GM12878 (cell line): ENCODE measurements at regions of chr6 and their contacts with region 1.

Region 1: DNA sequence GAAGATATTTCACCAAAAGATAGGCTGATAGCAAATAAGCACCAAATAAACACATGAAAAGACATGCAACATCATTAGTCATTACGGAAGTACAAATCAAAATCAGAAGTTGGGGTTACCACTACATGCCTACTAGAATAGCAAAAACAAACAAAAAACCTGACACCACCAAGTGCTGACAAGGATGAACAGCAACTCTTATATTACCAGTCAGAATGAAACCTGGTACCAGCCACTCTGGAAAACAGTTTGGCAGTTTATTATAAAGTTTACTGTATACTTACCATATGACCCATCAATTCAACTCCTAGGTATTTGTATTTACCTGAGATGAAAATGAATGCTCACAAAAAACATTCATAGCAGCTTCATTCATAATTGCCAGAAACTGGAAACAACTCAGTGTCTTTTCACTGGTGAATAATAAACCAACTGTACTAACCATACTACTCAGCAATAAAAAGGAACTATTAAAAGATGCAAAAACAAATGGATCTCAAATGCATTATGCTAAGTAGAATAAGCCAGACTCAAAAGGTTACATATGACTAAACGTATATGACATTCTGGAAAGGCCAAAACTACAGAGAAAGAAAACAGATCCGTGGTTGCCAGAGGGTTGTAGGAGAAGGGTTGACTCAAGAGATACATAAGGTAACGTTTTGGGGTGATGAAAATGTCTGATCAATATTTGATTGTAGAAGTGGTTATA is 33.0 kb downstream of the NUP153 start:
- DNase-seq: no peak
- ATAC-seq: peak; percentile 55
- H3K4me3 ChIP-seq: no peak overlapping the region
- H3K27ac ChIP-seq: no peak overlapping the region
- H3K4me1 ChIP-seq: no peaks in the 10 kb centered on the region
- H3K27me3 ChIP-seq: no peaks in the 10 kb centered on the region
- CTCF ChIP-seq: no peak
- EP300 ChIP-seq: no peak
- POLR2A ChIP-seq: no peak
- RAD21 ChIP-seq: no peak

Region 2: GRCh38 chr6:17638212-17638715 is 35.4 kb before region 1 on chr6:
- CTCF ChIA-PET with region 1: interaction called, 3 read pairs
- POLR2A ChIA-PET with region 1: interaction called, 4 read pairs
- RAD21 ChIA-PET with region 1: no interaction called
- SMC1A ChIA-PET with region 1: no interaction called
- in situ Hi-C with region 1: no loop called
- intact Hi-C with region 1: loop called (anchors 5 kb)
- DNase-seq: no peak
- ATAC-seq: no peak
- H3K4me3 ChIP-seq: no peak overlapping the region
- H3K27ac ChIP-seq: no peak overlapping the region
- H3K4me1 ChIP-seq: 0 out of 2 replicates have a peak, but pooled peaks cover 4% of the 10 kb centered on the region
- H3K27me3 ChIP-seq: no peaks in the 10 kb centered on the region
- CTCF ChIP-seq: no peak
- EP300 ChIP-seq: no peak
- POLR2A ChIP-seq: no peak
- RAD21 ChIP-seq: no peak